CD8-positive, alpha-beta T cell (primary cell): ENCODE measurements at regions of chr15 and their contacts with region 1.

Region 1: GRCh38 chr15:41401904-41402267 is 410 bp downstream of the NDUFAF1 start:
- DNase-seq: no peak
- ATAC-seq: no peak
- H3K4me3 ChIP-seq: peak overlapping the region; percentile 81 to 95
- H3K4me3 Mint-ChIP-seq: peak overlapping the region; percentile 96
- H3K27ac ChIP-seq: peak overlapping the region; percentile 81 to 84
- H3K27ac Mint-ChIP-seq: peak overlapping the region; percentile 96
- H3K4me1 ChIP-seq: peaks cover 10% of the 10 kb centered on the region
- H3K4me1 Mint-ChIP-seq: peaks cover 23% of the 10 kb centered on the region
- H3K27me3 ChIP-seq: no peaks in the 10 kb centered on the region
- H3K27me3 Mint-ChIP-seq: no peaks in the 10 kb centered on the region
- CTCF ChIP-seq: no peak

Region 2: DNA sequence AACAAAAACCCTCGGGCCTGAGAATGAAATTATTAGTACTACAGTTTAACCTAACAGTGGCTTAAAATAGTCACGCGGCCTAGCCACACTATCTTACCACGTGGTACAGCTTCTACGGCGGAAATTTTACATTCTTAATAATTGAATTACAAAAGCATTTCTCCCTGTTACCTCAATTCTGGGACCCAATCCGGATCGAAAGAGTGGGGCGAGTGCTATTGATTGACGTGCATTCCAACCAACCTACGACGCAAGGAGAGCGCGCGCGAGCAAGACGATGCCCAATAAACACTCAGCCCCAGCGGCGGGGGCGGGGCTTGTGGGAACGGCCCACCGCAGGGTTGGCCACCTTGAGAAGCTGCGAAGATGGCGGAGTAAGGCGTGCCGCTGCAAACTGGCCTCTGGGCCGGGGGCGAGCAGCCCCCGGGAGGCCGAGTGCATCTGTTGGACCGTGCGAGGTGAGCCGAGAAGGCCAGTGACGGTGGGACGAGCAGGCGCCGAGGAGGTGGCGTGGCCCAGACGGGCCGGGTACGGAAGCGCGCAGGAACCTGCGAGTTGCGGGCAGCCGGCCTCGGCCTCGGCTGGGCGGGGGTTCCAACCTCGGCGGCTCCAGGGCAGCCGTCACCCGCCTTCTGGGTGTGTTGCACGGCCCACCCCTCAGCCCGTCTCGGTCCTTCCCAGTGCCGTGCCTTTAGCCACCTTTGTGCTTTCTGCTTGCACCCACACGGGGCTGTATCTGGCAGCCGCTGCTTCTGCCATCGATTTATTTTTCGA is 118.0 kb before region 1 on chr15:
- CTCF ChIA-PET with region 1: no interaction called
- POLR2A ChIA-PET with region 1: interaction called, 5 read pairs
- intact Hi-C with region 1: loop called in 1 of 2 experiments (anchors 2 kb)
- DNase-seq: peak; percentile 94 to 100 (median 97)
- ATAC-seq: peak; percentile 96
- H3K4me3 ChIP-seq: peak overlapping the region; percentile 70 to 86
- H3K4me3 Mint-ChIP-seq: peak overlapping the region; percentile 89
- H3K27ac ChIP-seq: peak overlapping the region; percentile 91 to 93
- H3K27ac Mint-ChIP-seq: peak overlapping the region; percentile 95
- H3K4me1 ChIP-seq: peaks cover 25% of the 10 kb centered on the region
- H3K4me1 Mint-ChIP-seq: peaks cover 48% of the 10 kb centered on the region
- H3K27me3 ChIP-seq: no peaks in the 10 kb centered on the region
- H3K27me3 Mint-ChIP-seq: no peaks in the 10 kb centered on the region
- CTCF ChIP-seq: no peak

Region 3: GRCh38 chr15:41331833-41332787 is 69.8 kb before region 1 on chr15 and contains the start of gene OIP5:
- CTCF ChIA-PET with region 1: no interaction called
- POLR2A ChIA-PET with region 1: no interaction called
- intact Hi-C with region 1: loop called (anchors 1 kb)
- DNase-seq: peak; percentile 95 to 100 (median 96)
- ATAC-seq: peak; percentile 96
- H3K4me3 ChIP-seq: peak within 1 kb of the TSS; percentile 84 to 94
- H3K4me3 Mint-ChIP-seq: peak within 1 kb of the TSS; percentile 97
- H3K27ac ChIP-seq: peak within 1 kb of the TSS; percentile 46 to 63
- H3K27ac Mint-ChIP-seq: peak within 1 kb of the TSS; percentile 87
- H3K4me1 ChIP-seq: peaks cover 14% of the 10 kb centered on the region
- H3K4me1 Mint-ChIP-seq: peaks cover 30% of the 10 kb centered on the region
- H3K27me3 ChIP-seq: no peaks in the 10 kb centered on the region
- H3K27me3 Mint-ChIP-seq: no peaks in the 10 kb centered on the region
- CTCF ChIP-seq: peak; percentile 58
- total RNA-seq, gene OIP5: not detected

Region 4: GRCh38 chr15:41438206-41438605 is 36.3 kb after region 1 on chr15:
- CTCF ChIA-PET with region 1: no interaction called
- POLR2A ChIA-PET with region 1: no interaction called
- intact Hi-C with region 1: no loop called
- DNase-seq: no peak
- ATAC-seq: no peak
- H3K4me3 ChIP-seq: no peak overlapping the region
- H3K4me3 Mint-ChIP-seq: no peak overlapping the region
- H3K27ac ChIP-seq: no peak overlapping the region
- H3K27ac Mint-ChIP-seq: no peak overlapping the region
- H3K4me1 ChIP-seq: no peaks in the 10 kb centered on the region
- H3K4me1 Mint-ChIP-seq: peaks cover 15% of the 10 kb centered on the region
- H3K27me3 ChIP-seq: no peaks in the 10 kb centered on the region
- H3K27me3 Mint-ChIP-seq: no peaks in the 10 kb centered on the region
- CTCF ChIP-seq: no peak

Region 5: DNA sequence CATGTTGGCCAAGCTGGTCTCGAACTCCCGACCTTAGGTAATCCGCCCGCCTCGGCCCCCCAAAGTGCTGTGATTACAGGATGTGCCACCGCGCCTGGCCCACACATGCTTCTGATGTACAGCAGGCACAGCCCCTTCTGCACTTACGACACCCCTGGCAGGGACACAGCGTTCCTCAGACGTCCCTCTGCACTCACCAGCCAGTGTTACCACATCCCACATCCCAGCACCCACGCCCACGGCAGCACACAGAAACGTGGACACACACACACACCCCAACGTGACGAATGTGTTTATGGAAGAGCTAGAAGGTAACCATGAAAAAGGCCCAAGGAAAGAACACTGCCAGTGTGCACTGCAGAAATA is 142.7 kb after region 1 on chr15:
- CTCF ChIA-PET with region 1: no interaction called
- POLR2A ChIA-PET with region 1: no interaction called
- intact Hi-C with region 1: loop called in 1 of 2 experiments (anchors 1 kb)
- DNase-seq: peak in 7 of 9 experiments; percentile 16 to 61 (median 55)
- ATAC-seq: peak; percentile 30
- H3K4me3 ChIP-seq: peak overlapping the region; percentile 88 to 95
- H3K4me3 Mint-ChIP-seq: peak overlapping the region; percentile 91
- H3K27ac ChIP-seq: peak overlapping the region in 1 of 2 experiments; percentile 64
- H3K27ac Mint-ChIP-seq: peak overlapping the region; percentile 95
- H3K4me1 ChIP-seq: peaks cover 8% of the 10 kb centered on the region
- H3K4me1 Mint-ChIP-seq: peaks cover 18% of the 10 kb centered on the region
- H3K27me3 ChIP-seq: no peaks in the 10 kb centered on the region
- H3K27me3 Mint-ChIP-seq: no peaks in the 10 kb centered on the region
- CTCF ChIP-seq: no peak